Heart left ventricle (tissue), 16 donors: ENCODE measurements at regions of chr7 and their contacts with region 1.

Region 1: DNA sequence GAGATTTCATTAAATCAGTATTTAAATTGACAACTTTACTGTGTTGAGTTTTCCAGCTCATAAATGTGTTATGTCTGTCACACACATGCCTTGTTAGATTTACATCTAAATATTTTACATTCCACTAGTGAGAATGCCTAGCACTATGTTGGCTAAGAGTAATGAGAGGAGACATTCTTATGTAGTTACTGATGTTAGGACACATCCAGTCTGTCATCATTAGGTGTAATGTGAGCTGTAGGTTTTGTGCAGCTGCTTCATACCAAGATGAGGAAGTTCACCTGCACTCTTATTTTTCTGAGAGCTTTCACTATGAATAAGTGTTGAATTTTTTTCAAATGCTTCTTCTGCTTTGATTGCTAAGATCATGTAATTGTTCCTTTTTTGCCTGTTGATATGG is 218.0 kb upstream of the IGFBP3 start:
- DNase-seq: no peak
- ATAC-seq: no peak
- H3K4me3 ChIP-seq: no peak overlapping the region
- H3K27ac ChIP-seq: no peak overlapping the region
- H3K4me1 ChIP-seq: no peaks in the 10 kb centered on the region
- H3K27me3 ChIP-seq: no peaks in the 10 kb centered on the region
- CTCF ChIP-seq: no peak
- POLR2A ChIP-seq: no peak

Region 2: DNA sequence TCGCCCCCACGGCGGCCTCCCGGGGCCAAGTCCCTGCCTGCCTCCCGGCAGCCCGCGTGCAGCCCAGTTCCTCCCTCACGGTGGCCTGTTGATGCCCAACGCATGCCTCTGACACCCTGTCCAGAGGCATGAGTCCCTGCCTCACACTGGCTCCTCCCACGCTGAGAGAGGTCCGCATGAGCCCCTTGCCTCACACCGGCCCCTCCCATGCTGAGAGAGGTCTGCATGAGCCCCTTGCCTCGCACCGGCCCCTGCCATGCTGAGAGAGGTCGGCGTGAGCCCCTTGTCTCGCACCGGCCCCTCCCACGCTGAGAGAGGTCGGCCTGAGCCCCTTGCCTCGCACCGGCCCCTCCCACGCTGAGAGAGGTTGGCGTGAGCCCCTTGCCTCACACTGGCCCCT is 326.1 kb before region 1 on chr7:
- intact Hi-C with region 1: no loop called
- DNase-seq: no peak
- ATAC-seq: no peak
- H3K4me3 ChIP-seq: no peak overlapping the region
- H3K27ac ChIP-seq: no peak overlapping the region
- H3K4me1 ChIP-seq: no peaks in the 10 kb centered on the region
- H3K27me3 ChIP-seq: no peaks in the 10 kb centered on the region
- CTCF ChIP-seq: no peak
- POLR2A ChIP-seq: no peak

Region 3: GRCh38 chr7:45938626-45939302 is 200.3 kb before region 1 on chr7:
- intact Hi-C with region 1: loop called in 1 of 10 experiments (anchors 10 kb)
- DNase-seq: no peak
- ATAC-seq: no peak
- H3K4me3 ChIP-seq: no peak overlapping the region
- H3K27ac ChIP-seq: no peak overlapping the region
- H3K4me1 ChIP-seq: no peaks in the 10 kb centered on the region
- H3K27me3 ChIP-seq: no peaks in the 10 kb centered on the region
- CTCF ChIP-seq: peak in 2 of 12 donors; percentile 3 to 25
- POLR2A ChIP-seq: no peak

Region 4: DNA sequence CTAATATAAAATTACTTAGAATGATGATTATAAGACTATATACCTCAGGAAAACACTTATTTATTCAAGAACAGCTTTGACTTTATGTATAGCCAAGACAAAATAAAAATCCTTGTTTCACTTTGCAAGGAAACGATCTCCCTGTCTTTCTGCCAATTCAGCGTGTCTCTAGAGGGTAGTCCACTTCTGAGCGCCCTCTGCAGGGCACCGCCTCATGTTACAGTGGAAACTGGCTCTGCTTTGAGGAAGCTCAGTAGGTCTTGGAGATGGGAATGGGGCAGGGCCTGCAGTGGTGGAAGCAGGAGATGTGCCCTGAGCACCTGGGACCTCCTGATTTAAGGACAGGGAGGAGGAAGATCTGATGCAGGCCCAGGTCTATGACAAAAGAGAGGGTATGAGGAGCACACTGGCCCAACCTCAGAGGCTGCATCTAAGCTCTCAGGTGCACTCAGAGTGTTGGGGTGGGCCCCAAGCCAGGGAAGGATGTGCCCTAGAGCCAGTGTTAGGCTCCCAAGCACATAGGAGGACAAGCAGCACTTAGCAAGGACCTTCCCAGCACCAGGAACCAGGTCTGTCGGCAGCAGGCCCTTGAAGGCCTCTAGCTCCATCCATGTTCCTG is 961.8 kb after region 1 on chr7:
- intact Hi-C with region 1: loop called in 1 of 10 experiments (anchors 5 kb)
- DNase-seq: peak in 3 of 5 donors; percentile 36 to 37 (median 36)
- ATAC-seq: peak in 3 of 4 donors; percentile 53 to 59 (median 57)
- H3K4me3 ChIP-seq: no peak overlapping the region
- H3K27ac ChIP-seq: no peak overlapping the region
- H3K4me1 ChIP-seq: peaks cover 0 to 6% (median 0%) of the 10 kb centered on the region in 12 donors
- H3K27me3 ChIP-seq: no peaks in the 10 kb centered on the region
- CTCF ChIP-seq: peak in 11 of 12 donors; percentile 31 to 59 (median 45)
- POLR2A ChIP-seq: no peak